Endothelial cell of umbilical vein (primary cell): ENCODE measurements at regions of chr11 and their contacts with region 1.

Region 1: DNA sequence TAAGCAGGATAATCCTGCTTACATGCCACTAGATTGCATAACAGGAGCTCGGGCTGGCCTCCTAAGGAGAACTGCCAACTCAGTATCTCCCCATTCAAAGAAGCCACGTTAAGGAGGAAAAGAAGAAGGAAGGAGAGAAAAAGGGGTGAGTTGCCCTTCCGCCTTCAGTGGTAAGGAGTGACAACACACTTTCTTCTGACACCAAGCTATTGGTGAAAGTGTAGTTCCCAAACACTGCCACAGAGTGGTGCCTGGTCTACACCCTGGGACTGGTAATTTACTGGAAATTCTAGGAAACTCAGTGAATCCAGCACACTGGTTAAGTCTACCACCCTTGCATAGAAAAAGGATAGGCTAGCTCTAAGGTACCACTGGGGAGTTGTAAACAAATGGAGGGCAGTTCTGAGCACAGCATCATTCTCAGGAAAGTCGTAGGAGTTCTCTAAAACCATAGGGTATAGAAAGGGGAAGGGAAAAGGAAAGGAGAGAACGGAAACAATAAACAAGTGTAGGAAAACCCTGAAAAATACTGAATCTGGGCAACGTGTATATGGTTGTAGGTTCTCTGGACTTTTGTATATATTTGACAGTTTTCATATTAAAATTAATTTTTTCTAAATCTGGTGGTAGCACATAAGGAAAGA is 58.2 kb downstream of the RRAS2 start:
- DNase-seq: peak; percentile 88
- H3K4me3 ChIP-seq: no peak overlapping the region
- H3K27ac ChIP-seq: no peak overlapping the region
- H3K4me1 ChIP-seq: peaks cover 10% of the 10 kb centered on the region
- H3K27me3 ChIP-seq: no peaks in the 10 kb centered on the region
- CTCF ChIP-seq: peak; percentile 78 to 86
- POLR2A ChIP-seq: peak; percentile 27

Region 2: DNA sequence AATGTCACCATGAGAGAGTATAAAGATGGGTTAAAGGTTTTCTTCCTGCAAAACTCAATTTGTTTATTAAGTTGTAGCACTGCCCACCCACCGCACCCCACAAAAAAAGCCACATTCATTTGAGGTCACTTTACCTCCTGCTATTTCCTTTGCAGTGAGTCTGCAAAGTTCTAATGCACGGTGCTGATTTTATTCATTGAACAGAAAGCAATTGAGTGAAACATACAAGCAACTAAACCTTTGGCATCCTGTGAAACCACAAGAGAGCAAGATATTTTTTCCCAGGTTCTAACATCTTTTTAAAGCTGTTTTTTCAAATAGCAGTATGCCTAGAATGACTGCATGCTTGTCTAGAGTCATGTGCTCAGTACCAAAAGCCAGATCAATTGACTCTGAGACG is 19.2 kb after region 1 on chr11:
- CTCF ChIA-PET with region 1: interaction called, 14 read pairs
- POLR2A ChIA-PET with region 1: no interaction called
- dilution Hi-C with region 1: no loop called
- intact Hi-C with region 1: no loop called
- DNase-seq: no peak
- H3K4me3 ChIP-seq: no peak overlapping the region
- H3K27ac ChIP-seq: no peak overlapping the region
- H3K4me1 ChIP-seq: peaks cover 69% of the 10 kb centered on the region
- H3K27me3 ChIP-seq: no peaks in the 10 kb centered on the region
- CTCF ChIP-seq: no peak
- POLR2A ChIP-seq: no peak

Region 3: DNA sequence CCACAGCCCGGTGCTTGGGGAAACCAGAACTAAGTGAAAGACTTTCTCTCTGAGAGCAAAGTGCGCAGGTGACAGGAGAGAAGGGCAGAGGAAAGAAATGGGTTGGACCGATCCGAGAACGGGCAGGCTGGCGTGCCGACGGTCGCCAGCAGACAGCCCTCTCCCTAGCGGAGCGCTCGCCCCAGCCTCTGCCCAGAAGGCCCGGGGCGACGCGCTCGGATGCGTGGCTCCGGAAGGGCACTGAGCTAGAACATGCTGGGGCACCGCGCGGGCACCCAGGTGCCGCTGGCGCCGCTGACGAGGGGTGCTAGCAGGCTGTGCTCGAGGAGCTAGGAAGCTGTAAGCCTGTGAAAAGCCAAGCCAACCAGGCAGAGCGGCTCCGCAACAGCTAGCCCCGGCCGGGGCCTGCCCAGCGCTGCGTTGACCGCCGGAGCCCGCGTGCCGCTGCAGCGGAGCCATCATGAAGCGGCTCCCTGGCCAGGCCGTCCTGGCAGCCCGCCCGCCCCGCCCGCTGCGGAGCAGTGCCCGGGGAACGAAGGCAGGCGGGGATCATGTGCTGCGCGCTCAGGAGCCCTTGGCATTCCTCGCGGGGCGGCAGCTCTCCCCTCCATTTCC is 80.3 kb after region 1 on chr11:
- CTCF ChIA-PET with region 1: interaction called, 19 read pairs
- POLR2A ChIA-PET with region 1: no interaction called
- dilution Hi-C with region 1: no loop called
- intact Hi-C with region 1: no loop called
- DNase-seq: peak; percentile 73
- H3K4me3 ChIP-seq: peak overlapping the region; percentile 24 to 55 (median 40)
- H3K27ac ChIP-seq: peak overlapping the region; percentile 15
- H3K4me1 ChIP-seq: peaks cover 12% of the 10 kb centered on the region
- H3K27me3 ChIP-seq: no peaks in the 10 kb centered on the region
- CTCF ChIP-seq: no peak
- POLR2A ChIP-seq: peak; percentile 60

Region 4: DNA sequence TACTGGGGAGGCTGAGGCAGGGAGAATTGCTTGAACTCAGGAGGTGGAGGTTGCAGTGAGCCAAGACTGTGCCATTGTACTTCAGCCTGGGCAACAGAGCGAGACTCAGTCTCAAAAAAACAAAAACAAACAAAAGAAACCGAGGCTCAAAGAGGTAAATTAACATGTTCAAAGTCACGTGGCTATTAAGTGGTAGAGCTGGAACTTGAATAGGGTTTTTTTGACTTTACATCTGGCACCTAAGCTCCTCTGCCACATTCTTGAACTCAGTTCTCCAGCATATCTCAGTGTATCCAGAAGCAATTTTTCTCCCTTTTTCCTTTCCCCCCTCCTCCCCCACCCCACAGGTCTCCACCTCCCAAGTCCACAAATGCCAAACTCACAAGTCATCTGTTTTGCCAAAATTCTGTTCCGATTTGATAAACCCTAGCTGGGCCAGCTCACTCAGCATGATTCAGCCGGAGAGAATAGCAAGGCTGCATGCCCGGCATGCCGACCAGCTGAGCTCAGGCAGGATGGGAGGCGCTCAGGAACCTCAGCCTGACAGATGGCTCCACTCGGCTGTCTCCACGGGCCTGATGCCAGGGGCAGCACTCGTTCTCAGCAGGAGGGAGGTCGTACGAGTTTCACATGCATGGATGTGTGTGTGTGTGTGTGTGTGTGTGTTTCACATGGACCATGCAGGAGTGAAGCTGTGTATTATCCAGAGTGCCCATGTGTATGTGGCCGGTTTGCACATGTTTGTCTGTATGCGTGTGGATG is 121.5 kb after region 1 on chr11:
- CTCF ChIA-PET with region 1: interaction called, 261 read pairs
- POLR2A ChIA-PET with region 1: interaction called, 8 read pairs
- dilution Hi-C with region 1: no loop called
- intact Hi-C with region 1: loop called (anchors 1 kb)
- DNase-seq: peak; percentile 98
- H3K4me3 ChIP-seq: no peak overlapping the region
- H3K27ac ChIP-seq: peak overlapping the region; percentile 69
- H3K4me1 ChIP-seq: peaks cover 44% of the 10 kb centered on the region
- H3K27me3 ChIP-seq: no peaks in the 10 kb centered on the region
- CTCF ChIP-seq: no peak
- POLR2A ChIP-seq: peak; percentile 69

Region 5: DNA sequence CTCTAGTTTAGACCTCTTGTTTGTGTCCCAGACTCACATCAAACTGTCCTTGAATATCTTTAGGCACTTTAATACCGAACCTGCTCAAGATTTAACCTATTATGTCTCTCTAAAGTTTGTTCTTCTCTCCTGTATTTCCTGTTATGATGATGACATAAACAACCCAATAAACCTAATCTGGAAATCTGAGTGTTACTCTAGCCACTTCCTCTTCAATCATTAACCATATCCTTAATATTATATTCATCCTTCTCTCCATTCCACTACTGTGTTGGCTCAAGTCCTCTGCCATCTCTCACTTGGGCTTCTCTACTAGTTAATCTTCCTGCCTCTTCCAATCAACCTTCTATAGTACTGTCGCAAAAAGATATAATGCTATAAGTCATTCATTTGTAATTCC is 162.8 kb after region 1 on chr11:
- CTCF ChIA-PET with region 1: interaction called, 23 read pairs
- POLR2A ChIA-PET with region 1: no interaction called
- dilution Hi-C with region 1: loop called (anchors 25 kb)
- intact Hi-C with region 1: no loop called
- DNase-seq: no peak
- H3K4me3 ChIP-seq: no peak overlapping the region
- H3K27ac ChIP-seq: no peak overlapping the region
- H3K4me1 ChIP-seq: peaks cover 3% of the 10 kb centered on the region
- H3K27me3 ChIP-seq: no peaks in the 10 kb centered on the region
- CTCF ChIP-seq: no peak
- POLR2A ChIP-seq: no peak

Region 6: GRCh38 chr11:14480716-14481115 is 179.9 kb after region 1 on chr11:
- CTCF ChIA-PET with region 1: interaction called, 10 read pairs
- POLR2A ChIA-PET with region 1: no interaction called
- dilution Hi-C with region 1: no loop called
- intact Hi-C with region 1: no loop called
- DNase-seq: no peak
- H3K4me3 ChIP-seq: no peak overlapping the region
- H3K27ac ChIP-seq: no peak overlapping the region
- H3K4me1 ChIP-seq: no peaks in the 10 kb centered on the region
- H3K27me3 ChIP-seq: no peaks in the 10 kb centered on the region
- CTCF ChIP-seq: no peak
- POLR2A ChIP-seq: no peak